ENCODE measurements at regions of chr1 and their contacts with region 1.

Region 1: GRCh38 chr1:55384680-55385079 is 169.5 kb upstream of the USP24 start:
- DNase-seq: no peak
- ATAC-seq: no peak

Region 2: GRCh38 chr1:56584910-56585528 is 1200.3 kb after region 1 on chr1:
- intact Hi-C with region 1: loop called (anchors 5 kb)
- DNase-seq: no peak
- ATAC-seq: peak; percentile 71

Measured in left ventricle myocardium superior (tissue), 1 donor.